PC-9 (cell line): ENCODE measurements at regions of chr2 and their contacts with region 1.

Region 1: DNA sequence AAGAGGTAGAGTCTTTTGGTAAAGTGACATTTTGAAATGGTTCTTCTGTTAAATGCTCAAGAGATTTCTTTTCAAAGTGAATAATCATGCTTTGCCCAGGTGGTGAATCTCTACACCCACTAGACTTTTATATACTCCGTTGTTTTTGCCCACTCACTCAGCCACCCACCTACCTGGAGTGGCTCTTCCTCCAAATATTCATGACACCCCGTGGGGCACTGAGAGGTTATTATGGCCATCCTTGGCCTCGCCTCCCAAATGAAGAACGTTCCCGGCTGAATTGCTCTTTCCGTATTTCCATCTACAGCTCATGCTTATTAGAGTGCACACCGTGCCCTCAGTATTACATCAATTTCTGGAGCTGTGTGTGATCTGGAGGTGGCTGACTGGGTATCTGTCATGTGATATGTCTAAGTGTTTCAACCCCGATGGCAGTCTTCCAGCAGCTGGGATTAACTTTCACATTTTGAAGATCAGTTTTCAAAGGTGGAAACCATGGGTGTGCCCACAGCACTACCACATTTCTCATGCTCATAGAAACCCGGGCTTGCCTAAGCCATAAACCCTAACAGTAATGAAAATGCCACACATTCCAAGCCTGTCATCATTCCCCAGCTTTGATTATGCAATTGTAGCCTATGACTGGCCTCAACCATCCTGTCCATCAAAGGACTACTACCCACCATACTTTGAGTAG is 406.6 kb upstream of the MMADHC start:
- DNase-seq: peak; percentile 89 to 95
- H3K4me3 ChIP-seq: no peak overlapping the region
- H3K27ac ChIP-seq: peak overlapping the region; percentile 82
- H3K4me1 ChIP-seq: peaks cover 30% of the 10 kb centered on the region
- H3K27me3 ChIP-seq: no peaks in the 10 kb centered on the region
- CTCF ChIP-seq: no peak

Region 2: DNA sequence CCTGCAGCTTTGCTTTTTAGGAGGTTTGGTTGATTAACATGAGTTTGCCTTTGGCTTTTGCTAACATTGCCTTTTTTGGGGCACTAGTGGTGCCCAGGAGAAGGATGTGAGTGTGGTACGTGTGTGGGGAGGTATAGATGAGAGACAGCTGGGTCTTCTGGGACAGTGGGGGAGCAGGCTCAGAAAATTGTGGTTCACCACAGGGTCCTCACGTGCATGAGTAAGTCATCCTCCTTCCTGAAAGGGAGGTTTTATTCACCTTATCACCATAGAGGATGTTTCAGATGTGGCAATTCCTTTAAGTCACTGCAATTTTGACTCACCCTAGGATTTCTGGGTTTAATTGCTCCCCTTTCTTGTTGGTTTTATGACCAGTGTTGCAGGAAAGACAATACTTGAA is 826.8 kb before region 1 on chr2:
- CTCF ChIA-PET with region 1: no interaction called
- POLR2A ChIA-PET with region 1: no interaction called
- intact Hi-C with region 1: loop called (anchors 5 kb)
- DNase-seq: peak in 1 of 2 experiments; percentile 69
- H3K4me3 ChIP-seq: no peak overlapping the region
- H3K27ac ChIP-seq: peak overlapping the region; percentile 34
- H3K4me1 ChIP-seq: peaks cover 56% of the 10 kb centered on the region
- H3K27me3 ChIP-seq: no peaks in the 10 kb centered on the region
- CTCF ChIP-seq: no peak

Region 3: GRCh38 chr2:149860276-149860921 is 133.8 kb before region 1 on chr2:
- CTCF ChIA-PET with region 1: no interaction called
- POLR2A ChIA-PET with region 1: no interaction called
- intact Hi-C with region 1: loop called (anchors 5 kb)
- DNase-seq: peak in 1 of 2 experiments; percentile 33
- H3K4me3 ChIP-seq: no peak overlapping the region
- H3K27ac ChIP-seq: no peak overlapping the region
- H3K4me1 ChIP-seq: peaks cover 10% of the 10 kb centered on the region
- H3K27me3 ChIP-seq: no peaks in the 10 kb centered on the region
- CTCF ChIP-seq: no peak

Region 4: GRCh38 chr2:150147889-150148683 is 153.9 kb after region 1 on chr2:
- CTCF ChIA-PET with region 1: no interaction called
- POLR2A ChIA-PET with region 1: no interaction called
- intact Hi-C with region 1: no loop called
- DNase-seq: no peak
- H3K4me3 ChIP-seq: no peak overlapping the region
- H3K27ac ChIP-seq: no peak overlapping the region
- H3K4me1 ChIP-seq: peaks cover 8% of the 10 kb centered on the region
- H3K27me3 ChIP-seq: no peaks in the 10 kb centered on the region
- CTCF ChIP-seq: no peak

Region 5: GRCh38 chr2:150167711-150168110 is 173.5 kb after region 1 on chr2:
- CTCF ChIA-PET with region 1: no interaction called
- POLR2A ChIA-PET with region 1: no interaction called
- intact Hi-C with region 1: loop called (anchors 1 kb)
- DNase-seq: peak; percentile 42 to 86
- H3K4me3 ChIP-seq: no peak overlapping the region
- H3K27ac ChIP-seq: peak overlapping the region; percentile 98
- H3K4me1 ChIP-seq: peaks cover 48% of the 10 kb centered on the region
- H3K27me3 ChIP-seq: no peaks in the 10 kb centered on the region
- CTCF ChIP-seq: no peak

Region 6: GRCh38 chr2:150449871-150450270 is 455.7 kb after region 1 on chr2:
- CTCF ChIA-PET with region 1: no interaction called
- POLR2A ChIA-PET with region 1: no interaction called
- intact Hi-C with region 1: loop called (anchors 1 kb)
- DNase-seq: peak; percentile 52 to 93
- H3K4me3 ChIP-seq: no peak overlapping the region
- H3K27ac ChIP-seq: peak overlapping the region; percentile 87
- H3K4me1 ChIP-seq: peaks cover 22% of the 10 kb centered on the region
- H3K27me3 ChIP-seq: no peaks in the 10 kb centered on the region
- CTCF ChIP-seq: no peak

Region 7: GRCh38 chr2:150528861-150529801 is 534.9 kb after region 1 on chr2:
- CTCF ChIA-PET with region 1: no interaction called
- POLR2A ChIA-PET with region 1: interaction called, 10 read pairs
- intact Hi-C with region 1: loop called (anchors 1 kb)
- DNase-seq: peak in 1 of 2 experiments; percentile 91
- H3K4me3 ChIP-seq: peak overlapping the region; percentile 33; the same call in 1 of the 2 replicates
- H3K27ac ChIP-seq: peak overlapping the region; percentile 95
- H3K4me1 ChIP-seq: peaks cover 51% of the 10 kb centered on the region
- H3K27me3 ChIP-seq: no peaks in the 10 kb centered on the region
- CTCF ChIP-seq: no peak

Region 8: GRCh38 chr2:151238527-151239487 is 1244.6 kb after region 1 on chr2:
- CTCF ChIA-PET with region 1: no interaction called
- POLR2A ChIA-PET with region 1: no interaction called
- intact Hi-C with region 1: loop called (anchors 5 kb)
- DNase-seq: peak; percentile 43 to 59
- H3K4me3 ChIP-seq: no peak overlapping the region
- H3K27ac ChIP-seq: no peak overlapping the region
- H3K4me1 ChIP-seq: 0 out of 2 replicates have a peak, but pooled peaks cover 4% of the 10 kb centered on the region
- H3K27me3 ChIP-seq: no peaks in the 10 kb centered on the region
- CTCF ChIP-seq: peak; percentile 89